ENCODE measurements at regions of chr9 and their contacts with region 1.

Region 1: DNA sequence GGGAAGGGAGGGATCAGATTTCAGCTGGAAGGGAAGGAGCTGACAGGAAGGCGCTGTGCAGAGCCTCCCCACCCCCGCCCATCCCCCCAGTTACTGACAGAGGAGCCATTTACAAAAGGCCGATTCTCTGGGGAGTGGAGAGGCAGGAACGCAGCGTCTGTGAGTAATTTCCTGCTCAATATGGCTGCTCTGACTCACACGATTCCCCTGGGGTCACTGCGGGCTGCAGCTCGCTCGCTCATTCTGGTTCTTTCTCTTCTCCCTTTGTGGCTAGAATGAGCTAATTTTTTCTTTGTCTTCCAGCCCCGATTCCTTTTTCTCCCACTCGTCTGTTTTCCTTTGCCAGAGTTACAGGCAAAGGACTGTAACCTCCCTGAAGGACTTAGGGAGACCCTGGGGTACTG is 28.8 kb downstream of the PTPA start:
- H3K4me3 ChIP-seq: peak overlapping the region; percentile 12
- H3K27ac ChIP-seq: peak overlapping the region; percentile 100
- H3K4me1 ChIP-seq: peaks cover 13% of the 10 kb centered on the region
- CTCF ChIP-seq: no peak

Region 2: DNA sequence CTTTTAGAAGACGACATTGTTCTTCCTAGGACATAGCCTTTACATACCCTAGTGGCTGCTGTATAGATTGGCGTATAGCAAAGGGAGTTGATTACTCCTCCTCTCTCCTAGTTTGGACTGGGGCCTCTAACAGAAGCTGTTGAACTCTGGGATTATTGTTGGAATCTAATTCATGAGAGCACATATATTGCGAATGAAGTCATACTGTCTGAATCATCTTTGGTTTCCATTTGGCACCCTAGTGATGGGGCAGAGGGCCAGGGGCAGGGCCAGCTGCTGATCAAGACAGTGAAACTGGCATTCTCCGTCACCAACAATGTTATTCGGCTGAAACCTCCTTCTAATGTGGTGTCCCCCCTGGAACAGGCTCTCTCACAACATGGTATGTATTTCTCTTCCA is 152.2 kb before region 1 on chr9:
- CTCF ChIA-PET with region 1: no interaction called
- POLR2A ChIA-PET with region 1: no interaction called
- H3K4me3 ChIP-seq: no peak overlapping the region
- H3K27ac ChIP-seq: no peak overlapping the region
- H3K4me1 ChIP-seq: no peaks in the 10 kb centered on the region
- CTCF ChIP-seq: no peak

Region 3: DNA sequence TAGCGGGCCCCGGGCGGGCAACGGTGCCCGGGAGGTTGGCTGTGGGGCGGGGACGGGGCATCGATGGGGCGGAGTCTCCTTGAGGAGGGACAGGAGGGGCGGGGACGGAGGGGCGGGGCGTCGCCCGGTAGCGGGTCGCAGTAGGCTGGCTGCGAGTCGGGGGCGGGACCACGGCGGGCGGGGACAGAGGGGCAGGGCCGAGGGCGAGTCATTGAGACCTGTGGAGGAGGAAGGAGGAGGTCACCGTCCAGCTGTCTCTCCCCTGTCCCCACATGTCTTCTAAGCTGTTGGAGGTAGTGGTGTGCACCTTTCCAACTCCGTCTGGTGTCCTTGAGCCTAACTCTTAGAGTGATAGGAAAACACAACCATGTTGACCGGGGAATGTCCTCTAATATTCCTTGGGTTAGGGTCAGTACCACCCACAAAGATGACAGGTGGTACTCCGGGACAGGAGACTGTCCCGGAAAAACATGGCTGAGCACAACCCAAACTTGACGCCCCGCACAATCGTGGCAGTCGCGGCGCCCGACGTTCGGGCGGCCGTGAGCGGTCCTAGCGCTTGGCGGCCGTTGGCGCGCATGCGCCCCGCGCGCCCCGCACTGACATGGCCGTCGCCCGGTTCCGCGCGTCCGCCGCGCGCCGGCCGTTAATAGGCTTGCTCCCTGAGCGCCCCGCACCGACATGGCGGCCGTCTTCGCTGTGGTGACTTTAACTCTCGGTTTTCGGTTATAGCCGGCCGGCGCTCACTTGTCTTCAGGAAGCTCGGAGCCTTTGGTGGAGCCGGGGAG is 29.1 kb before region 1 on chr9 and contains the starts of genes CRAT and PTPA:
- CTCF ChIA-PET with region 1: interaction called, 10 read pairs
- POLR2A ChIA-PET with region 1: interaction called, 7 read pairs
- H3K4me3 ChIP-seq: peak within 1 kb of the TSS; percentile 97
- H3K27ac ChIP-seq: peak within 1 kb of the TSS; percentile 87
- H3K4me1 ChIP-seq: peaks cover 4% of the 10 kb centered on the region; the same call in 1 of the 2 replicates
- CTCF ChIP-seq: no peak

Region 4: GRCh38 chr9:129154866-129155477 is 15.0 kb after region 1 on chr9:
- CTCF ChIA-PET with region 1: interaction called, 61 read pairs
- POLR2A ChIA-PET with region 1: interaction called, 4 read pairs
- H3K4me3 ChIP-seq: no peak overlapping the region
- H3K27ac ChIP-seq: no peak overlapping the region
- H3K4me1 ChIP-seq: no peaks in the 10 kb centered on the region
- CTCF ChIP-seq: no peak

Region 5: GRCh38 chr9:129160712-129161533 is 20.9 kb after region 1 on chr9:
- CTCF ChIA-PET with region 1: interaction called, 61 read pairs
- POLR2A ChIA-PET with region 1: interaction called, 6 read pairs
- H3K4me3 ChIP-seq: no peak overlapping the region
- H3K27ac ChIP-seq: no peak overlapping the region
- H3K4me1 ChIP-seq: no peaks in the 10 kb centered on the region
- CTCF ChIP-seq: no peak

Region 6: DNA sequence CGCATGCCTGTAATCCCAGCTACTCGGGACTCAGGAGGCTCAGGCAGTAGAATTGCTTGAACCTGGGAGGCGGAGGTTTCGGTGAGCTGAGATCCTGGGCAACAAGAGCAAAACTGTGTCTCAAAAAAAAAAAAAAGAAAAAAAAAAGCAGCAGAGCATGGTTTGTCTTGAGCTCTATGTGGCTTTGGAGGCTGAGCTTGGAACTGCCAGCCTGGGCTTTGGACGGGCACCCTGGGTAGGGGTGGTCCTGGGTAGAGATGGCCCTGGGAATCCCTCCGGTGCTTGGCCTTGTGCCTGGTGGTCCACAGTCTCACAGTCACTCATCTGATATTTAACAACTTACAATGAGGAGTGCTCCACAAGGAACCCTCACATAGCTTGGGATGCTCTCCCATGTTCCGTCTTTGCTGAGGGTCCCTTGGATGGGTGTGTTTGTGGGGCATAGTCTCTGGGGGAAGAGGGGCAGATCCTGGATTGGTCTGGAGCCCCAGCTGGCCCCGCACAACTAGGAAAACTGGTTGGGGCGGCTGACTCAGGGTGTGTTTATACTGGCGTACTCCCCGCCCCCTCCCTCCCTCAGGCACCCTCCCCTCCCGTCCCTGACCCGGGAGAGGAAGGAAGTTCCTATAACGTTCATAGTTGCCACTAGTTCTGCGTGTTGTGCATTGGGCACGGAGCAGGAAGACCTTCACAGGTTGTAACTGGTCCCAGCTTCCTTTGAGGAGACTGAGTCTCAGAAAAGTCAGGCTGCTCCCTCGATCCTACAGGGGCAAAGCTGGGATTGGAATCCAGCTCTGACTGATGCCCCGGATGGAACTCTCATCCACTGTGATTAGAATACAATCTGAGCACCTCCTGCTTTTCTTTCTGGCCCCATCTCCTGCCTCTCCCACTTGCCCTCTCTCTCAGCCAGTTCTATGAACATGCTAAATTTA is 26.9 kb after region 1 on chr9:
- CTCF ChIA-PET with region 1: interaction called, 104 read pairs
- POLR2A ChIA-PET with region 1: interaction called, 6 read pairs
- H3K4me3 ChIP-seq: peak overlapping the region; percentile 0; the same call in 1 of the 2 replicates
- H3K27ac ChIP-seq: no peak overlapping the region
- H3K4me1 ChIP-seq: no peaks in the 10 kb centered on the region; the same call in 1 of the 2 replicates
- CTCF ChIP-seq: no peak

Region 7: DNA sequence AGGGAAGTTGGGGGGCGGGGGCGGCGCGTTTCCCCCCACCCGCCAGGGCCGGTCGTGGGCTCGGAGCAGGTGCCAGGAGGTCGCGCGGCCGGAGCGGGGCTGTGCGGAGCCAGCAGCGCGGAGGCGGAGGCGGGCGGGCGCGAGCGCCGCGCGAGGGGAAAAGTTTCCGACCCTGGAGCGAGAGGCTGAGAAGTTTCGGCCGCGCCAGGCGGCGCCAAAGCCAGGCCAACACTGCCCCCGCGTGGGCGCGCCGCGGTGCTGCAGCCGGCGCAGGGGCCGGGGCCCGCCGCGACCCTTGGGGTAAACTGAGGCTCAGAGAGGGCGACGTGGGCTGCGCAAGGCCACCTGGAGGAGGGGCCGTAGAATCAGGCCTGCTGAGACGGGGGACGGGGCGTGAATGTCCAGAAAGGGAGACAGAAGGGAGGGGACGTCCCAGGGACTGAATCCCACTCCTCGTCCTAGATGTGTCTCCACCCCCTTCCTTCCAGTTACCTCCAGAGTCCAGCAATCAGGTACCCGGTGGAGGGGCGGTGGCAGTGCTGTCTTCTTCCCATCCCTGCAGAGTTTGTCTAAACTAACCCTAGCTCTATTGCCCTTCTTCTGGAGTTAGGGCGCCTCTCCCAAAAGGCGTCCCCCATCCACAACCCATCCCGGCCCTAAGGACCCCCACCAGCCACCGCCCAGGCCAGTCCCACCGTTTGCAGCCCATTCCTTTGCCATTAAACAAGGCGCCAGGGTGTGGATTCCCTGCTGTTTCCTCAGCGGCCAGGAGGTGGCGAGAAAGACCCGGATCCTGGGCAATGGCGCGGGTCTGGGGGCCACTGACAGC is 470.7 kb after region 1 on chr9:
- CTCF ChIA-PET with region 1: interaction called, 507 read pairs
- POLR2A ChIA-PET with region 1: interaction called, 9 read pairs
- H3K4me3 ChIP-seq: peak overlapping the region; percentile 44
- H3K27ac ChIP-seq: peak overlapping the region; percentile 49; the same call in 1 of the 2 replicates
- H3K4me1 ChIP-seq: no peaks in the 10 kb centered on the region; the same call in 1 of the 2 replicates
- CTCF ChIP-seq: peak; percentile 76; the same call in 1 of the 2 replicates

Region 8: GRCh38 chr9:129626079-129626624 is 486.2 kb after region 1 on chr9 and contains the start of gene NTMT1:
- CTCF ChIA-PET with region 1: interaction called, 507 read pairs
- POLR2A ChIA-PET with region 1: interaction called, 11 read pairs
- H3K4me3 ChIP-seq: peak within 1 kb of the TSS; percentile 62
- H3K27ac ChIP-seq: peak within 1 kb of the TSS; percentile 61
- H3K4me1 ChIP-seq: peaks cover 3% of the 10 kb centered on the region; the same call in 1 of the 2 replicates
- CTCF ChIP-seq: peak; percentile 6; the same call in 1 of the 2 replicates

Measured in HEK293 (cell line).